ENCODE measurements at regions of chrX and their contacts with region 1.

Region 1: DNA sequence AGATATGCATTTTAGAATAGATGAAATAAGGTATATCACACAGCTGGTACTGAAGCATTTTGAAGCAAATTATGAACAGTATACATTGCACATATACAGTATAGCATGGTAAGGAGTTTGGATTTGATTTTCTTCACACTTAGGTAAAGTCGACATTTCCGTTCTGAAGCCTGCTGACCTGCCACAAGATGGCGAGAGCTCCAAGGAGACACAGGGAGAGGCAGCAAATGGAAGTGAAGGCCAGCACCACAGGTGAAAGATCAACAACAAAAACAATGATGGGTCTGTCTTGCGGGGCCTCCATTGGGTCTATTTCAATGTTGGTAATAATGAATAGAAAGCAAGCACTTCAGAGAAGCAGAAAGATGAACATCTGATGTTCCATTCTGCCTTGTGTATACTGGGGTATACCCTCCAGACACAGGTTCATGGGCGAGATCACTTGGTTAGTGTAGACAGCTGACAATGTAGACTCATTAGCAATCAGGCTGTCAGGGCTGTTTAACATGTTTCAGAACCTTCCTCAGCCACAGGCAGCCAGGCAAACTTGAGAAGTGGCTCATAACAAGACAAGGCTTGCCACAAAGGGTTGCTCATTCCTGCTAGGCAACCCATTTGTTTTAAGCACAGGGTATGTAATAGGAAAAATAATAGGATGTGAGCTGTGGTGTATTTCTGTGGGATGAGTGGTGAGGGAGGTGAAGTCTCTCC is 21.4 kb upstream of the NOX1 start:
- DNase-seq: peak; percentile 67
- H3K4me3 ChIP-seq: no peak overlapping the region
- H3K27ac ChIP-seq: no peak overlapping the region
- H3K4me1 ChIP-seq: peaks cover 7% of the 10 kb centered on the region
- CTCF ChIP-seq: peak; percentile 83

Region 2: GRCh38 chrX:101009086-101009485 is 113.6 kb after region 1 on chrX:
- CTCF ChIA-PET with region 1: no interaction called
- POLR2A ChIA-PET with region 1: no interaction called
- intact Hi-C with region 1: loop called (anchors 10 kb)
- DNase-seq: no peak
- H3K4me3 ChIP-seq: no peak overlapping the region
- H3K27ac ChIP-seq: no peak overlapping the region
- H3K4me1 ChIP-seq: no peaks in the 10 kb centered on the region
- CTCF ChIP-seq: no peak

Region 3: GRCh38 chrX:101287402-101287801 is 391.9 kb after region 1 on chrX:
- CTCF ChIA-PET with region 1: no interaction called
- POLR2A ChIA-PET with region 1: no interaction called
- intact Hi-C with region 1: loop called (anchors 10 kb)
- DNase-seq: peak; percentile 47
- H3K4me3 ChIP-seq: no peak overlapping the region
- H3K27ac ChIP-seq: no peak overlapping the region
- H3K4me1 ChIP-seq: no peaks in the 10 kb centered on the region
- CTCF ChIP-seq: peak; percentile 74